PC-9 (cell line): ENCODE measurements at regions of chr6 and their contacts with region 1.

Region 1: GRCh38 chr6:13908955-13909381 is 15.8 kb upstream of the RNF182 start:
- DNase-seq: peak; percentile 54 to 67
- H3K4me3 ChIP-seq: no peak overlapping the region
- H3K27ac ChIP-seq: no peak overlapping the region
- H3K4me1 ChIP-seq: peaks cover 18% of the 10 kb centered on the region
- H3K27me3 ChIP-seq: no peaks in the 10 kb centered on the region
- CTCF ChIP-seq: peak; percentile 92

Region 2: DNA sequence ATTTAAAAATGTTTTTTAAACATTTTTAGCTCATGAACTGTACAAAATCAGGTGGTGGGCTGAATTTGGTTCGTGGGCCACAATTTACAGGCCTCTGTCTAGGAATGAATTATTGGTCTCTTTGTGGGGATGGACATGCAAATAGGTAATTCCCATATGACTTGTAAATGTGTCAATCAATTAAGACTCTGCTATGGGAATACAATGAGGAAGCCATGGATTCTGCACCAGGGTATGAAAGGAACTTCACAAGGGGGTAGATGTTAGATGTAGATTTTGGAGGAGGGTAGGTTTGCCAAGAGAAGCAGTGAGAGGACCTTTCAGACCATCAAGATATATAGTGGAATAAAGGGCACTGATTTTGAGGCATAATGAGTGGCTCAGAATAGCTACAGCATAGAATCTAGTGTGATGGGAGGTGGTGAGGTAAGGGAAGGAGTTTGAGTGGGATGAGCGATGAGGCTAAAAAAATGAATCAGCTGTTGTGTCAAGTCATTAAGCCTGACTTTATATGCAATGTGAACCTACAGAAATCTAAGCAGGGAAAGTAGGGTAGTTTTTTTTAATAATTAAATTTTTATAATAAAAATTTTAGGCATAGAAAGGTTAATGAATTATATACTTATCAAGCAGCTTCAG is 16.8 kb before region 1 on chr6:
- CTCF ChIA-PET with region 1: no interaction called
- POLR2A ChIA-PET with region 1: interaction called, 25 read pairs
- intact Hi-C with region 1: no loop called
- DNase-seq: no peak
- H3K4me3 ChIP-seq: no peak overlapping the region
- H3K27ac ChIP-seq: no peak overlapping the region
- H3K4me1 ChIP-seq: no peaks in the 10 kb centered on the region
- H3K27me3 ChIP-seq: no peaks in the 10 kb centered on the region
- CTCF ChIP-seq: no peak

Region 3: DNA sequence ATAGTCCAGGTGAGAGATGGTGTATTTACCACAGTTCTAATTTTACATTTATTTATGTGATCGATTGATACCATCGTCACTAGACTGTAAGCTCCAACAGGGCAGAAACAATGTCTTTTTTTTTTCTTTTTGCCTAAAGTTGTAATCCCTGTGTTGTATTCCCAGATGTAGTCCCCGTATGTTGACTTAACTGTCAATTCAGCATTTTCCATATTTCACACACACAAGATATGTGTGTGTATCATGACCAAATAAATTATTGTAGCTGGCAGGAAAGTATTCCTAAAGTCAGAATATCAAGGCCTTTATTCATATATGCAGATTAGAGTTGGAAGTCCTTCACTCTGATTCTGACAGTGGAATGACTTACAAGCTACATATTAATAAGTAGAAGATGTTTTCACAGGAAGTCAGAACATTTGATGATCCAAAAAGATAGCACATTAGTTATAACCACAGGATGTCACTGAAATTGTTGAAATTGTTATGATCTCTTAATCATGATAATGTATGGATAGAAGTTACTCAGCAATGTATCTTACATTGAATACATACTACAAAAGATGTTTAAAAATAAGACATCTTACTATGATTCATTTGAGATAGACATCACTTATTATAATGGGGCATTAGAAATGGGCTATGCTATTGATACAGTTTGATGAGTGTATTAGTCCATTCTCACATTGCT is 26.4 kb after region 1 on chr6:
- CTCF ChIA-PET with region 1: no interaction called
- POLR2A ChIA-PET with region 1: no interaction called
- intact Hi-C with region 1: no loop called
- DNase-seq: no peak
- H3K4me3 ChIP-seq: no peak overlapping the region
- H3K27ac ChIP-seq: no peak overlapping the region
- H3K4me1 ChIP-seq: no peaks in the 10 kb centered on the region
- H3K27me3 ChIP-seq: no peaks in the 10 kb centered on the region
- CTCF ChIP-seq: no peak

Region 4: DNA sequence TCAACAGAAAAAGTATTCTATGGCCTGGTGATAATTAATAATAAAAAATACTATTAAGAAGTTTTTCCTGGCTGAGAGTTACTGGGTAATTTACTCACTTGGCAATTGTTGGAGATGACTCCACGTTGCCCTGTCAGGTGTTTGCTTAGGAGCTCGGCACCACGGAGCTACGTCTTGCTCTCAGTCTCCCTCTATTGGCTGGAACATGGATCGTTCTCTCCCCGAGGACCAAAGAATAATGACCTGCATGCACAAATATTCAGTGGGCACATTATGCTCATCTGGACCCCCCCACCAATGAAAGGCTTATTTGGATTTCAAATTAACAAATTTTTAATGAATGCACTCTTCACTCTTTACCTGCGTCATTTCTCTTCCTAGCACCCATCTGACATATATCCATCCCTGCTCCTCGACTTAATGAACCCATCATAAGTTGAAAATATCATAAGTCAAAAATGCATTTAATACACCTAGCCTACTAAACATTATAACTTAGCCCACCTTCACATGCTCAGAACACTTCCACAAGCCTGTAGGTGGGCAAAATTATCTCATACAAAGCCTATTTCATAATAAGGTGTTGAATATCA is 137.6 kb after region 1 on chr6:
- CTCF ChIA-PET with region 1: interaction called, 7 read pairs
- POLR2A ChIA-PET with region 1: no interaction called
- intact Hi-C with region 1: loop called (anchors 1 kb)
- DNase-seq: peak; percentile 40 to 42
- H3K4me3 ChIP-seq: no peak overlapping the region
- H3K27ac ChIP-seq: no peak overlapping the region
- H3K4me1 ChIP-seq: no peaks in the 10 kb centered on the region
- H3K27me3 ChIP-seq: no peaks in the 10 kb centered on the region
- CTCF ChIP-seq: peak; percentile 75

Region 5: GRCh38 chr6:14144678-14145113 is 235.7 kb after region 1 on chr6:
- CTCF ChIA-PET with region 1: no interaction called
- POLR2A ChIA-PET with region 1: no interaction called
- intact Hi-C with region 1: loop called (anchors 1 kb)
- DNase-seq: peak in 1 of 2 experiments; percentile 65
- H3K4me3 ChIP-seq: no peak overlapping the region
- H3K27ac ChIP-seq: no peak overlapping the region
- H3K4me1 ChIP-seq: peaks cover 12% of the 10 kb centered on the region
- H3K27me3 ChIP-seq: no peaks in the 10 kb centered on the region
- CTCF ChIP-seq: peak; percentile 95

Region 6: GRCh38 chr6:14816116-14816859 is 907.3 kb after region 1 on chr6:
- CTCF ChIA-PET with region 1: no interaction called
- POLR2A ChIA-PET with region 1: no interaction called
- intact Hi-C with region 1: no loop called
- DNase-seq: no peak
- H3K4me3 ChIP-seq: no peak overlapping the region
- H3K27ac ChIP-seq: no peak overlapping the region
- H3K4me1 ChIP-seq: peaks cover 11% of the 10 kb centered on the region; the same call in 1 of the 2 replicates
- H3K27me3 ChIP-seq: no peaks in the 10 kb centered on the region
- CTCF ChIP-seq: no peak